ENCODE measurements at regions of chr11 and their contacts with region 1.

Region 1: GRCh38 chr11:87097582-87097981 is 59.8 kb downstream of the TMEM135 start:
- DNase-seq: peak; percentile 19
- H3K4me3 Mint-ChIP-seq: no peak overlapping the region
- H3K27ac Mint-ChIP-seq: no peak overlapping the region
- H3K4me1 Mint-ChIP-seq: peaks cover 10% of the 10 kb centered on the region
- H3K27me3 Mint-ChIP-seq: no peaks in the 10 kb centered on the region

Region 2: DNA sequence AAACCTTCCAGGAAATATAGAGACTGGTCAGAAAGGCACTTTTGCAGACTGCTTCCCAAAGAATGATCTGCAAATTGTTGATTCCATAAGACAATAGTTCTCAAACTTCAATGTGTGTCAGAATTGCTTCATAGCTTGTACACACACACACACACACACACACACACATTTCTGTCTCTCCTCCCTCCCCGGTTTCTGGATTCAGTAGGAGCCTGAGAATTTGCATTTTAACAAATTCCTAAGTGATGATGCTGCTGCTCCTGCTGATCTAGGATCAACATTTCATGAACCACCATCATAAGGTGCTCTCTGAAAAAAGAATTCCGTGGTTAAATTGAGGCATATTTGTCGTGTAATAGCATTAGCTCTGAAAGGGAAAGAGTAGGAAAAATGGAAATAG is 107.1 kb before region 1 on chr11:
- intact Hi-C with region 1: loop called (anchors 1 kb)
- DNase-seq: no peak
- H3K4me3 Mint-ChIP-seq: no peak overlapping the region
- H3K27ac Mint-ChIP-seq: no peak overlapping the region
- H3K4me1 Mint-ChIP-seq: no peaks in the 10 kb centered on the region
- H3K27me3 Mint-ChIP-seq: peaks cover 7% of the 10 kb centered on the region

Region 3: GRCh38 chr11:87081358-87081757 is 16.2 kb before region 1 on chr11:
- intact Hi-C with region 1: no loop called
- DNase-seq: no peak
- H3K4me3 Mint-ChIP-seq: peak overlapping the region; percentile 78
- H3K27ac Mint-ChIP-seq: peak overlapping the region; percentile 87
- H3K4me1 Mint-ChIP-seq: peaks cover 32% of the 10 kb centered on the region
- H3K27me3 Mint-ChIP-seq: no peaks in the 10 kb centered on the region